HEK293 (cell line): ENCODE measurements at regions of chr6 and their contacts with region 1.

Region 1: DNA sequence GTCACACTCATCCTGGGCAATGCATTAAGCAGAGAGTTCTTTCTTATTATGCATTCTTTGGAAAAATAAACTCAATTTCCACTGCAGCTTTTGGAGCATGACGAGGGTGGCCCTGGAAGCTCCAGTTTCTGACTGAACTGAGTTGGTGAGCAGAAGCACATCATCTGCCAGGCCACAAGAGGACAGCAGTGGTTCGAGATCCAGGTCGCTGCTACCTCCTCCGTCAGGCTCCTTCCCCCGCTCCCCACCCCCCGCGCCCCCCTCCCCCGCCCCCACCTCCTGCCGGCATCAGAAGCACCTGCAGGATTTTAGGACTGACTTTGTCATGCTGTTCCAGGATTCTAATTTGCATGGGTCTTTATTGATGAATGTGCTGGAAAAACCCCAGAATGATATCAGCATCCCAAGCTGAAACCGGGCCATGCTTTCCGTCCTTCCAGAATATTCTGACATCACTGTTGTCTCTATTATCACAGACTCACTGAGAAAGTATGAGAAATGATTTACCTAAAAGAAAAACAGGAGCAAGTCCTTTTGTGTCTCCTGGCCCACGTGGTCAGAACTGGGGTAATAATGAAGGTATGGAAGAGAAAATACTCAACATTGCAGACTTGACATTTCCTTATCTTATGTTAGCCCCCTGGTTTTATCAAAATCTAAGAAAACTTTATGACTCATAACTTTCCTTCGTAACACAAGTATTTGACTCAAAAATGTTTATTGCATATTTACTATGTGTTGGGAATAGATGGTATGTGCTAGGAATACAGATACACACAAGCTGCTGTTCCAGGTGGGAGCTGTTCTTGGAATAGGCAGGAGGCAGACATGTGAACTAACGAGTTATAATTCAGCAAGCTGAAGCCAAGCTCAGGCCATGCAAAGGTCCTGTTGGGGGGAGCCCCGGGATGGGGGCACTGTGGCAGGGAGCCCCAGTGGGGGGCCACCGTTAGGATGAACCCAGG is 220.2 kb upstream of the EXOC2 start:
- H3K4me3 ChIP-seq: no peak overlapping the region
- H3K27ac ChIP-seq: no peak overlapping the region
- H3K4me1 ChIP-seq: 0 out of 2 replicates have a peak, but pooled peaks cover 3% of the 10 kb centered on the region
- CTCF ChIP-seq: peak; percentile 26; the same call in 1 of the 2 replicates

Region 2: DNA sequence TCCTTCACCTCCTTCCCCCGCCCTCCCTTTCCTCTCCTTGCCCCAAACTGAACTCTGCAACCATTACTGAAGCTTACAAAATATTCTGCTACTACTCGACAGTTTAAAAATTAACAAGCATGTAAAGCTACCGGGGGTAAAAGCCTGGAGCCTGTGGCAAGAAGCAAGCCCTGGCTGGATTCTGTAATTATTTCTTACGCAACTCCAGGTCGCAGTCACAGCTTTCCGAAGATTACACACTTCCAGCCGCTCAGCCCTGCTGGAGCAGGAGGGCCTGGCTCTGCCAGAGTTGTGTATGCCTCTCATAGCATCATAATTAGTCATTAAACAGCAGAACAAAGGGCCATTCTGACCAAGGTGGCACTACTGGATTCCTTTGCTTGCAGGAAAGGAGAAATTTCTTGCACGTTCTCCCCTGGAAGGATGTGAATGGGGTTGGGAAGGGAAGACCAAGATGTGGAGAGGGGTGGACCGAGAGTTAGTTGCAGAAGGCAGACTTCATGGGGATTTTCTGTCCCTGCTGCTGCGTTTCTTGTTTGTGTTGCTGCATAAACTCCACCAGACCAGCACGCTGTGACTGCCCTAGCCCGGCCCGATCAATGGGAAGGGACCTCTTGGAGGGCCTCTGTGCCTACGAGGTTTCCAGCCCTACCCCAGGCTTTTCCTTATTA is 422.3 kb after region 1 on chr6:
- CTCF ChIA-PET with region 1: interaction called, 17 read pairs
- POLR2A ChIA-PET with region 1: no interaction called
- H3K4me3 ChIP-seq: no peak overlapping the region
- H3K27ac ChIP-seq: no peak overlapping the region
- H3K4me1 ChIP-seq: peaks cover 7% of the 10 kb centered on the region
- CTCF ChIP-seq: no peak

Region 3: GRCh38 chr6:1381481-1382330 is 468.6 kb after region 1 on chr6:
- CTCF ChIA-PET with region 1: interaction called, 23 read pairs
- POLR2A ChIA-PET with region 1: no interaction called
- H3K4me3 ChIP-seq: peak overlapping the region; percentile 46
- H3K27ac ChIP-seq: peak overlapping the region; percentile 63; the same call in 1 of the 2 replicates
- H3K4me1 ChIP-seq: no peaks in the 10 kb centered on the region; the same call in 1 of the 2 replicates
- CTCF ChIP-seq: peak; percentile 99

Region 4: DNA sequence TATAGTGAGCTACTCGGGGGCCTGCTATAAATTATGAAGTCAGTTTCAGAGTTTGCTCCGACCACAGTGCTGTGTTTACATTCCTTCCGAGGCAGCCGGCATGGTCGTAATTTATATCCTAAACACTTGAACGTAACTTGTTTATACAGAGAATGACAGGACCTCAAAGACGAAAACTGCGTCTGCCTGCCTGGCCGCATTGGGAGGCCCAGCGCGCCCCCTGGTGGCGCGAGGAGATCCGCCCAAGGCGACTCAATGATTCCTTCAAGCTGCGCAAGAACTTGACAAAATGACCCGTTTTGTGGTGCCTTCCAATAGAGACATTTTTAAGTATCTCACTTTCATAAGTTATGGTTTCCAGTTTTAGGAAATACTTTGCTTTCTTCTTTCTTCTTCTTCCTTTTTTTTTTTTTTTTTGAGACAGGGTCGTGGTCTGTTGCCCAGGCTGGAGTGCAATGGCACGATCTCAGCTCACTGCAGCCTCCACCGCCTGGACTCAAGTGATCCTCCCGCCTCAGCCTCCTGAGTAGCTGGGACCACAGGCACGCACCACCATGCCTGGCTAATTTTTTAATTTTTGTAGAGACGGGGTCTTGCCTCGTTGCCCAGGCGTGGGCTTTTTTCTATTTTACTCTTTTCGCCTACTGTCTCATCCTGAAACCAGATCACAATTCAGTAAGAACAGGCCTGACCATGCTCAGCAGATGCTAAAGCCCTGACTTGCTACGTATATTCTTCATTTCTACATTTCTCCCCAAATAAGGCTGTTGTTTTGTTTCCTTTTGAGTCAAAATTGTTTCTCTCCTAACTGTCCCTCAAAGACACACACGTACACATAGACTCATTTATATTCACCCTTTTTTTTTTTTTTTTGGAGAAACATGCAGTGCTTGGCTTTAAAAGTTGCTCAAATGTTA is 484.1 kb after region 1 on chr6:
- CTCF ChIA-PET with region 1: interaction called, 20 read pairs
- POLR2A ChIA-PET with region 1: no interaction called
- H3K4me3 ChIP-seq: no peak overlapping the region
- H3K27ac ChIP-seq: no peak overlapping the region
- H3K4me1 ChIP-seq: peaks cover 12% of the 10 kb centered on the region
- CTCF ChIP-seq: peak; percentile 90

Region 5: DNA sequence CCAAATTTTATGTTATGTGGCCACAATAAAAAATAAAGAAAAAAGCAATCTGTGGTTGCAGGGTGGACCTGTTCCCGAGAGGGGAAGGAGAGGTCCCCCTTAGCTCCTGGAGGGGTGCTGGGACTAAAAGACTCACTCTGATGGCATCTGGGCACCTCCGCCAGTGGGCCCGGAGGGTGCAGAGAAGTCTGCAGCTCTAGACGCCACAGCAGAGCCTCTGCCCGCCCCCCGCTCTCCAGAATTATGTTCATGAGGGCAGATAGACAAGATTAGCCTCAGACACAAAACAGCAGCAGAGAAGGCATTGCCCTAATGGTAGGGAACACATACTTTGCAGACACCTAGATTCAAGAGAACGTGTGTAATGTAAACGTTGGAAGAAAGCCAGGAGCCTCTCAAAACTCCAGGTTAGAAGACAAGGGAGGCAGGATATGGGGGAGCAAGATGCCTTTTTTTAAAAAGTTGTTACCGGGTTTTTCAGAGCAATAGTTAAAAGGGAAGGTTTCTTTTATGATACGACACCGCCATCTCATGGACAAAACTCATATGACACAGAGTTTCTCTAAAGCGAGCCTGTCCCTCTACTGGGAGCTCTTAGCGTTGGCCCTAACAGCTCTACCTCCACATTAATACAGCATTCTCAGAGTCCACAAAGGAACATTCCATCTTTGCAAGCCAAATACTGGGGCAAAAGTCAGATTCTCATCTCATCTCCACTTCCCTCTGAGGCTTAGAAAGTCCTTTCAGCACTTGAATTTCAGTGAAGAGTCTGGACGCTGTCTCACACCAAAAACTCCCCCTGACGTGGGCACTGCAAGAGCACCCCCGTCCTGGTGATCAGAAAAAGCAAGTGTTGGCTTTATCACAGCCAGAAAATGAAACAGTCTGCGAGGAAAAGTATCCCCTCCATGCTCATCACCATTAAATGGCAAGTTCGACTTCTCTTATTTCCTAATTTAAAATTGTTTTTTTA is 523.5 kb after region 1 on chr6:
- CTCF ChIA-PET with region 1: interaction called, 13 read pairs
- POLR2A ChIA-PET with region 1: no interaction called
- H3K4me3 ChIP-seq: no peak overlapping the region
- H3K27ac ChIP-seq: no peak overlapping the region
- H3K4me1 ChIP-seq: peaks cover 4% of the 10 kb centered on the region
- CTCF ChIP-seq: peak; percentile 82